ENCODE measurements at regions of chr4 and their contacts with region 1.

Region 1: GRCh38 chr4:75995727-75996126 is 5.0 kb upstream of the SDAD1 start:
- DNase-seq: peak; percentile 40
- H3K4me3 ChIP-seq: no peak overlapping the region
- H3K27ac ChIP-seq: no peak overlapping the region
- H3K4me1 ChIP-seq: no peaks in the 10 kb centered on the region
- H3K27me3 ChIP-seq: peaks cover 7 to 8% of the 10 kb centered on the region in 2 experiments
- CTCF ChIP-seq: peak; percentile 28 to 46
- POLR2A ChIP-seq: no peak

Region 2: DNA sequence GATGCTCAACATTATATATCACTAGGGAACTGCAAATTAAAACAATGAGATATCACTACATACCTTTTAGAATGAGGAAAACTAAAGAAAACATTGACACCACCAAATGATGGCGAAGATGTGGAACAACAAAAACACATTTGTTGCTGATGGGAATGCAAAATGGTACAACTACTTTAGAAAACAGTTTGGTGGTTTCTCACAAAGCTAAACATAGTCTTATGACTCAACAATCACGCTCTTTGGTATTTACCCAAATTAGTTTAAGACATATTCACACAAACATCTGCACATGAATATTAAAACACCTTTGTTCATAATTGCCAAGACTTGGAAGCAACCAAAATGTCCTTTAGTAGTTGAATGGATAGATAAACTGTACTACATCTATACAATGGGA is 218.1 kb before region 1 on chr4:
- CTCF ChIA-PET with region 1: no interaction called
- POLR2A ChIA-PET with region 1: no interaction called
- dilution Hi-C with region 1: no loop called
- intact Hi-C with region 1: no loop called
- DNase-seq: no peak
- H3K4me3 ChIP-seq: no peak overlapping the region
- H3K27ac ChIP-seq: no peak overlapping the region
- H3K4me1 ChIP-seq: no peaks in the 10 kb centered on the region
- H3K27me3 ChIP-seq: no peaks in the 10 kb centered on the region
- CTCF ChIP-seq: no peak
- POLR2A ChIP-seq: no peak

Region 3: DNA sequence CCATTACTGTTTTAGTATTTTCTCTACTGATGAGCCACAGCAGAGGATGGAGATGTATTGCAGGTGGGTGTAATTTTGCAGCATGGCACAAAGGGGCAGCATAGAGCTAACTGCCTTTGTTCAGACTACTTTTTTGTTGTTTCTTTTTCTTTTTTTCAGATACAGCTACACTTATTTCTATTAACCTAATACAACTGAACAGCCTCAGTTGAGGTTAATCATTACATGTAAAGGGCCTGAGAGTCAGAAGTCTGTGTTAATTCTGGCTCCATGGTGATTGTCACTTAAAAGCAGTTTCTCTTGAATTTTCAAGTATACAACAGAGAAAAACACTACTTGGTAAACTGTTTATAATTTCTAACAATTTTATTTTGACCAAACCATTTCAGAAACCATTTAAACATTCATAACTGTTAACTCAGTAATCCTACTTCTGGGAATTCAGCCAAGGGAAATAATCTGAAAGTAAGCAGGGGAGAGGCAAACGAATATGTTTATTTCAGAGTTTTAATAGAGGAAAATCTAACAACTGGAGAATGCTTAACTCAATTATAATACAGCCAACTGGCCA is 79.6 kb before region 1 on chr4:
- CTCF ChIA-PET with region 1: interaction called, 12 read pairs
- POLR2A ChIA-PET with region 1: no interaction called
- dilution Hi-C with region 1: no loop called
- intact Hi-C with region 1: no loop called
- DNase-seq: peak; percentile 73
- H3K4me3 ChIP-seq: no peak overlapping the region
- H3K27ac ChIP-seq: no peak overlapping the region
- H3K4me1 ChIP-seq: no peaks in the 10 kb centered on the region
- H3K27me3 ChIP-seq: no peaks in the 10 kb centered on the region
- CTCF ChIP-seq: peak; percentile 64 to 75
- POLR2A ChIP-seq: no peak

Region 4: GRCh38 chr4:76028350-76028765 is 32.6 kb after region 1 on chr4:
- CTCF ChIA-PET with region 1: interaction called, 10 read pairs
- POLR2A ChIA-PET with region 1: no interaction called
- dilution Hi-C with region 1: no loop called
- intact Hi-C with region 1: no loop called
- DNase-seq: peak; percentile 72
- H3K4me3 ChIP-seq: peak overlapping the region; percentile 16 to 62 (median 36)
- H3K27ac ChIP-seq: peak overlapping the region; percentile 7
- H3K4me1 ChIP-seq: peaks cover 10% of the 10 kb centered on the region
- H3K27me3 ChIP-seq: peaks cover 4% of the 10 kb centered on the region in 2 experiments
- CTCF ChIP-seq: no peak
- POLR2A ChIP-seq: no peak

Region 5: DNA sequence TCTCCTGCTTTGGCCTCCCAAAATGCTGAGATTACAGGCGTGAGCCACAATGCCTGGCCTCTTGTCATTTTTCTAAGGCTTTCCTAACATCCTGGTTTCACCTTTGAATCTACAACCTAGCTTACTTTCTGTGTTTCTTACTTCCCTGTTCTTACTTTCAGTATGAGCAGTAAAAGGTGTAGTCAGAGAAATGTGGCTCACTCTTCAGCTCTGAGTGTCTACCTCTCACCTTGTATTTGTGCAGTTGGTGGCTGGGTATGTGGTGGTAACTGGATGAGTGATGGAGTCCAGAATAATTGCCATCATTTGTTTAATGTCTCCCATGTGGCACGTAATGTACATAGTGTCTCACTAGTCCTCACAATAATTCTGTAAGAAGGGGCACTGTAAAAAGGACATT is 59.3 kb after region 1 on chr4:
- CTCF ChIA-PET with region 1: interaction called, 36 read pairs
- POLR2A ChIA-PET with region 1: no interaction called
- dilution Hi-C with region 1: no loop called
- intact Hi-C with region 1: no loop called
- DNase-seq: no peak
- H3K4me3 ChIP-seq: no peak overlapping the region
- H3K27ac ChIP-seq: no peak overlapping the region
- H3K4me1 ChIP-seq: no peaks in the 10 kb centered on the region
- H3K27me3 ChIP-seq: peaks cover 35 to 55% of the 10 kb centered on the region in 2 experiments
- CTCF ChIP-seq: no peak
- POLR2A ChIP-seq: no peak

Region 6: DNA sequence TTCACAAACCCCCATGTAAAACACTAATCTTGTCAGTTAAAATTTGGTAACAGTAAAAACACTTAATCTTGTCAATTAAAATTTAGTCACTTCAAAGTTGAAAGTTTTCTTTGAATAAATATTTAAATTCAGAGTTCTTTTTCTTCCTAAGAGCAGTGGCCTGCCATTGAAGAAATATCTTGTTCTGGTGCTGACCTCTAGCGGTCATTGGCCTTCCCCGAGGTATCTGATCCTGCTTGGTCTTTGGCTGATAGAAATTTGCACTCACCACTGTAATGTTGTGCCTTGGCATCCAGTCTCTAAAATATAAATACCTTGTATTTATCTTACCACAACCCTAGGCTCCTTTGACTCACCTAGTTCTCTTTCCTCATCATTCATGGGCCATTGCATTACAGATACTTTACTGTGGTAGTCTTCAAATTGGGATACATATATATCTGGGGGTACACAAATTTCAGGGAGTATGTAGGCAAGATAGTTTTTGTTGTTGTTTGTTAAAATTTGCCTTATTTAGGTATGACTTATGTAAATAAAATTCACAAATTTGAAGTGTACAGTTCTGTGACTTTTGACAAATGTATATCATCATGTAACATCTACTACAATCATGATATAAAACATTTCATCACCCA is 72.0 kb after region 1 on chr4:
- CTCF ChIA-PET with region 1: interaction called, 127 read pairs
- POLR2A ChIA-PET with region 1: no interaction called
- dilution Hi-C with region 1: no loop called
- intact Hi-C with region 1: loop called (anchors 1 kb)
- DNase-seq: peak; percentile 76
- H3K4me3 ChIP-seq: no peak overlapping the region
- H3K27ac ChIP-seq: no peak overlapping the region
- H3K4me1 ChIP-seq: no peaks in the 10 kb centered on the region
- H3K27me3 ChIP-seq: peaks cover 0 to 2% of the 10 kb centered on the region in 2 experiments
- CTCF ChIP-seq: peak; percentile 68 to 70
- POLR2A ChIP-seq: no peak

Region 7: DNA sequence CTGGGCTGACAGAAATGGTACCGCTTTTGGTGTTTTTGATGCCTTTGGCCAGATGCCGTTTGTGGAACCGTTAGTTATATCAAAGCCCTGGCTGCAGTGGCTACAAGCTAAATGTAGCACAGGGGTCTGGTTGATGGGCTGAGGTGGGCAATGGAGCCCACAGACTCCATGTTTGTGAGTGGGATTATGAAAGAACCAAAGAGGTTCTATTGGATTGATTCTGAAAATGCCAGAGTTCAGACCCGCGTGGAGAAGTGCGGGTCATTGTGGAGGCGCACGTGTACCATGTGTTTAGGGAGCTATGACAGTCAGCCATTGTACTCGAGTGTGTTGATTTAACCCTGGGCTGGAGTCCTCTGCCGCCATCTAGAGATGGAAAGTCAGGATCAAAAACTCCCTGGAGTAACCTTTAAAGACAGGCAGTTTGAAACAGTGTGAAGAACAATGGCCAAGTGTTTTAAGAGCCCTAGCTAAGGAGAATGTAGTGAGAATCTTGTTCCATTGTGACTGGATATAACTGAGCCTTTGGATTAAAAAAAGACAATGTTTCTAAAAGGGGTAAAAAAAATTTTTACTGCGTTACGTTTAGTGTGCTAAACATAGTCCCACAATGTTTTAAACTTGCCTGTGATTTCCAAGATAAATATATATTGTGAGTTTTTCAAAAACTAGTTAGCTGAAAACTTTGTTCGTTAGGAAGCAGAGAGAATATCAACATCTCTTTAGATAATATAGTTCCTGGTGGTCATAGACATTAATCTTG is 91.5 kb after region 1 on chr4:
- CTCF ChIA-PET with region 1: interaction called, 124 read pairs
- POLR2A ChIA-PET with region 1: no interaction called
- dilution Hi-C with region 1: no loop called
- intact Hi-C with region 1: loop called (anchors 5 kb)
- DNase-seq: peak; percentile 78
- H3K4me3 ChIP-seq: no peak overlapping the region
- H3K27ac ChIP-seq: no peak overlapping the region
- H3K4me1 ChIP-seq: peaks cover 7% of the 10 kb centered on the region
- H3K27me3 ChIP-seq: peaks cover 4 to 15% of the 10 kb centered on the region in 2 experiments
- CTCF ChIP-seq: peak; percentile 55 to 64
- POLR2A ChIP-seq: no peak